Activated CD8-positive, alpha-beta T cell treated with anti-CD3 and anti-CD28 coated beads for 36 hours (primary cell): ENCODE measurements at regions of chr5 and their contacts with region 1.

Region 1: DNA sequence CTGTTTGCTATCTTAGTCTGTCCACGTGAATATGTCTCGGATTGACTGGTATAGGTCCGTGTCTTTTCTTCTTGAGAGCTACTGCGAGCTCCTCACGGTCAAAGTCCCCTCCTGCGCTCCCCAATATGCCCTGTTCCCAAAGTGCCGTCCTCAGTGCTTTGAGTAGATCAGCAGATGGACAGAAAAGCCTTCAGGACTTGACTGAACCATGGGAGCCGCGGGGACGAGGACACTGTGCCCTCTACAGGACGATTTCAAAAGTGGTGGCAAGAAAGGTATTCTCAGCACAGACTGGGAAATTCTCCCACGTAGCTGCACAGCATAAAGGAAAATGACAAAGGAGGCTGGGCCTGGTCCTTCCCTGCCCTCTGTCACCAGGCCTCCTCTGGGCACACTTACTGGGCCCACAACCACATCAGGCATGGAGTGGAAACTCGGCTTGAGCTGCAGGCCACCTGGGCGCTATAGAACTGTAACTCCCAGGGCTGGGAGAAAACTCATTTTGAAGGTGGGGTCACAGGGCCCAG is 16.6 kb upstream of the MTMR12 start:
- DNase-seq: peak; percentile 72
- ATAC-seq: peak; percentile 89
- H3K4me3 Mint-ChIP-seq: no peak overlapping the region
- H3K27ac Mint-ChIP-seq: no peak overlapping the region
- H3K4me1 Mint-ChIP-seq: peaks cover 4% of the 10 kb centered on the region
- H3K27me3 Mint-ChIP-seq: no peaks in the 10 kb centered on the region
- CTCF ChIP-seq: peak; percentile 64

Region 2: DNA sequence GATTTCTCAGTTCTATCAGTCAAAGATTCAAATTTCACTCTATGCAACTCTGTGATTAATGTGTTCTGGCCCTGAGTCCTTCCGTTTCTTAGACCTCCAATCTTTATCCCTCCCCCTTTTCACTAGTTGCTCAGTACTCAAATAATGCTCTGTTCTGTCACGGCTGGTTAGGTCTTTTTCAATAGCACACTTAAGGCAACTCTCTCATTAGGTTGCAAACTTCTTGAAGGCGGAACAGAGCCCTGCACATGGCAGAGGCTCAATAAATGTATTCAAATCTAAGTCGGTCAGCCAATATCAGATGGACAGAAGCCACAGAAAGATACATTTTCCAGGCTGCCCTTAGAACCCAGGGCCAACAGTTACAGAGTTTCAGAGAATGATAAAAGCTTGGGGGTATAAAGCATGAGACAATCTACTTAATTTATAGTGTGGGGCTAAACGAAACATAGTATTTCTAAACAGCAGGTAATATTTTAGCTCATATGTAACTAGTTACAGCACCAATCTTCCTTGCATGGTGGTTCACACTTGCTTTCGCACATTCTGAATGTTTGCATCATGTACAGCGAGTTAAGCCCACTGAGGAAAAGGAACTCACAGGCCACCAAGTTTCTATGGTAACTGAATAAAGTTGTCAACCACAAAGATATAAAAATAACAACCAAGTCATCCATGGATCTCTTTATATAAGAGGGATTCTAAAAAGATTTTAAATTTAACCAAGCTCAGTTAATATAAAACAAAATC is 88.2 kb before region 1 on chr5:
- CTCF ChIA-PET with region 1: interaction called, 30 read pairs
- POLR2A ChIA-PET with region 1: no interaction called
- intact Hi-C with region 1: no loop called
- DNase-seq: no peak
- ATAC-seq: no peak
- H3K4me3 Mint-ChIP-seq: no peak overlapping the region
- H3K27ac Mint-ChIP-seq: peak overlapping the region; percentile 13
- H3K4me1 Mint-ChIP-seq: peaks cover 5% of the 10 kb centered on the region
- H3K27me3 Mint-ChIP-seq: no peaks in the 10 kb centered on the region
- CTCF ChIP-seq: no peak

Region 3: DNA sequence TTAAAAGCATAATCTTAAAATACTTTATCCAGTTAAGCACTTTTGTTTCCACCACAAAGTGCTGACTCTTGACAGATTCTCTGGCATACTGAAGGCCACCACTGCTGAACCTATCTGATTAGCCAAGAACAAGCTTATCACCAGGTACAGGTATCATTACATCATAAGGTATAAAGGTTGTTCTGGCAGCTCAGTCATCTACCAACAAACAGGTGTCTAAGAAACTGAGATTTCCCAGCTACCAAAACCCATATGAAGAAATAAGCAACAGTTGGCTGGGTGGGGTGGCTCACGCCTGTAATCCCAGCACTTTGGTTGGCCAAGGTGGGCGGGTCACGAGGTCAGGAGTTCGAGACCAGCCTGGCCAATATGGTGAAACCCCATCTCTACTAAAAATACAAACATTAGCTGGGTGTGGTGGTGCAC is 21.6 kb before region 1 on chr5:
- CTCF ChIA-PET with region 1: interaction called, 12 read pairs
- POLR2A ChIA-PET with region 1: interaction called, 4 read pairs
- intact Hi-C with region 1: no loop called
- DNase-seq: no peak
- ATAC-seq: no peak
- H3K4me3 Mint-ChIP-seq: no peak overlapping the region
- H3K27ac Mint-ChIP-seq: no peak overlapping the region
- H3K4me1 Mint-ChIP-seq: peaks cover 66% of the 10 kb centered on the region
- H3K27me3 Mint-ChIP-seq: no peaks in the 10 kb centered on the region
- CTCF ChIP-seq: no peak